Mammary epithelial cell (primary cell): ENCODE measurements at regions of chr11 and their contacts with region 1.

Region 1: DNA sequence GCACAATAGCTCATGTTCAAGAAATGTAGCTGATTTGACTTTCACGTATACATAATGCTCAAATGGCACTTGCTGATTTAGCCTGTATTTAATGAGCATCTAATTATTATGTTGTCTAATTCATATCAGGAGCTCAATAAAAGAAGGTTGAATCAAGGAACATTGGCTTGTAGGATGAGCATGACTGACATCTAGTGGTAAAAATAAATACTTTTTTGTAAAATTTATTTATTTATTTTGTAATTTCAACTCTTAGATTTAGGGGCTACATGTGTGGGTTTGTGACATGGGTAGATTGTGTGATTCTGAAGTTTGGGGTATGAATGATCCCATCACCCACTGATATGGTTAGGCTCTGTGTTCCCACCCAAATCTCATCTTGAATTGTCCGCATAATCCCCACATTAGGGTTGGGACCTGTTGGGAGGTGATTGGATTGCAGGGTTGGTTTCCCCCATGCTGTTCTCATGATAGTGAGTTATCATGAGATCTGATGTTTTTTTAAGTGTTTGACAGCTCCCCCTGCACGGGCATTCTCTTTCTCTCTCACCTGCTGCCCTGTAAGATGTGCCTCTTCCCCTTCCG is 1.7 kb upstream of the OR52E5 start:
- DNase-seq: peak; percentile 6
- H3K4me3 ChIP-seq: no peak overlapping the region
- H3K27ac ChIP-seq: no peak overlapping the region
- H3K4me1 ChIP-seq: no peaks in the 10 kb centered on the region
- H3K27me3 ChIP-seq: no peaks in the 10 kb centered on the region
- CTCF ChIP-seq: peak; percentile 24 to 45

Region 2: GRCh38 chr11:5476184-5476819 is 415.0 kb before region 1 on chr11:
- CTCF ChIA-PET with region 1: interaction called, 3 read pairs
- dilution Hi-C with region 1: no loop called
- in situ Hi-C with region 1: no loop called
- intact Hi-C with region 1: loop called (anchors 10 kb)
- DNase-seq: peak; percentile 27
- H3K4me3 ChIP-seq: no peak overlapping the region
- H3K27ac ChIP-seq: no peak overlapping the region
- H3K4me1 ChIP-seq: no peaks in the 10 kb centered on the region
- H3K27me3 ChIP-seq: peaks cover 3% of the 10 kb centered on the region
- CTCF ChIP-seq: peak; percentile 86 to 89